ENCODE measurements at regions of chr1 and their contacts with region 1.

Region 1: DNA sequence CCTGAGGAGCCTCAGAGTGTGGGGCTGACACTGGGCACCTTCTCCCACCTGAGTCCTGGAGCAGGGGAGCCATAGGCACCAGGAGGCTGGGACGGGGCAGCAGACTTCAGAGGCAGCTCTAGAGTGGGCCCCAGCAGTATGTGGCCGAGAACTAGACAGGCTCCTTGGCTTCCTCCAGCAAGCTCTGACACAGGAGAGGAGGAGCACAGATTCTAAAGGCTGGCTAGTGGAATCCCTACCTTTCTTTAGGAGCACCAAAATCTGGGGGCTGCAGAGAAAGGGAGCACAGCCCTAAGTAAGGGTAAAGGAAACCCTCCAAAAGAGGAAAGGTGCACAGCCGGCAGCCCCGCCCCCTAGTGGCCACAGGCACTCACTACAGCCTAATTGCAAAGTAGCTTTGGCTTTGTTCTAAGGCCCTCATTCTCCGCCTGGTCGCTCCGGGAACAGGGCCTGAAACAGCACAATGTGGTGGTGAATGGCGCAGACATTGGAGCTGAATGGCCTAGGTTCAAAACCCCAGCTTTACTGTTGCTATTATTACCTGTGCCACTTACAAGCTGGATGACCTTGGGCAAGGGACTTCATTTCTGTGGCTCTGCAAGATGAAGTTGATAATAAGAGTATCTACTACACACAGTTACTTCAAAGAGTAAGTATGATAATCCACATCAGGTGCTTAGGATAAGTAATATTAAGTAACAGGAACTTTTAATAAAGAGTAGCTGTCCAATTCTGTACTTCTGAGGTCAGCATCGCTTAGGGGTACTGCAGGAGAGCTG is 8.8 kb upstream of the GUCA2A start:
- DNase-seq: peak; percentile 42 to 67 (median 66)
- H3K4me3 ChIP-seq: no peak overlapping the region
- H3K27ac ChIP-seq: no peak overlapping the region
- H3K4me1 ChIP-seq: peaks cover 0 to 13% (median 3%) of the 10 kb centered on the region in 4 experiments
- H3K27me3 ChIP-seq: no peaks in the 10 kb centered on the region

Region 2: DNA sequence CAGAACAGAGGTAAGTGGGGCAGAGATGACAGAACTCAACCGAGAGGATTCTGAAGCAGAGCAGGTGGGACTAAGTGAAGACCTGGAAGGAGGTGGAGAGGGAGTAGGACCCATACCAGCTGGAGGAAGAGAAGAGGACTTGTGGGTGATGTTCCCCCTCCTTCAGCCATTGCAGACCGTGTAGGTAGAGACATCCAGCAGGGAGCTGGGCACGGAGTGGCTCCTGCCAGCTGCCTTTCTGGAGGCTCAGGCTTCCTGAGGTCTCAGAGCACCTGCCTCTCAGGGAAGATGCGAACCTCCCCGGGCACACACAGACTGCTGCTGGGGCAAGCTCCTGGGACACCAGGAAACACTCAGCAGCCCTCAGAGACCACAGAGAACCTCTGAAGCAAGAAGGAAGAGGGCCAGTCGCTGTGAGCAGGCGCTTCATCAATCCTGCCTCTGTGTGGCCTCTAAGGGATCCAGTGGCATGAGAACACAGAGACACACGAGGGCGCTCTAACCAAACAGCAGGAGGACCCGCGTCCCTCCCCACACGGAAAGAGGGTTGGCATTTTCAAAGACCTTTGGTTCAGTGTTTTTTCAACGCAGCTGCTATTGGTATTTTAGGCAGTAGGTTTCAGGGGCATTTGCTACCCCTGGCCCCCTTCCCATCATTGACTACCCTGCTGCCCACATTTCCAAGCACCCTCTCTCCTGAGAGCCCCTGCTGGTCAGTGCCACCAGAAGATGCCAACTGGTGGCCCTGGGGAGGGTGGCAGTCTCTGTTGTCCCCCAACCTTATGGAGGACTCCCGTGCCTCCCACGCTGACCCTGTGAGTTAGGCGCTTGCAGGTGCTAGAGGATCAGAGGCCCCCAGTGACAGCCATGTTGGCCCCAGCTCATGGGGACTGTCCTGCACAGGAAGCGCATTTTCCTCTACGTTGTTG is 599.3 kb before region 1 on chr1:
- CTCF ChIA-PET with region 1: interaction called, 34 read pairs
- POLR2A ChIA-PET with region 1: no interaction called
- DNase-seq: peak; percentile 85 to 95 (median 92)
- H3K4me3 ChIP-seq: no peak overlapping the region
- H3K27ac ChIP-seq: no peak overlapping the region
- H3K4me1 ChIP-seq: peaks cover 0 to 25% (median 7%) of the 10 kb centered on the region in 4 experiments
- H3K27me3 ChIP-seq: no peaks in the 10 kb centered on the region

Region 3: GRCh38 chr1:42146626-42147320 is 26.6 kb before region 1 on chr1:
- CTCF ChIA-PET with region 1: interaction called, 13 read pairs
- POLR2A ChIA-PET with region 1: no interaction called
- DNase-seq: peak; percentile 59 to 72 (median 70)
- H3K4me3 ChIP-seq: peak overlapping the region in 1 of 7 experiments; percentile 46
- H3K27ac ChIP-seq: no peak overlapping the region
- H3K4me1 ChIP-seq: peaks cover 2 to 44% (median 41%) of the 10 kb centered on the region in 4 experiments
- H3K27me3 ChIP-seq: no peaks in the 10 kb centered on the region

Region 4: DNA sequence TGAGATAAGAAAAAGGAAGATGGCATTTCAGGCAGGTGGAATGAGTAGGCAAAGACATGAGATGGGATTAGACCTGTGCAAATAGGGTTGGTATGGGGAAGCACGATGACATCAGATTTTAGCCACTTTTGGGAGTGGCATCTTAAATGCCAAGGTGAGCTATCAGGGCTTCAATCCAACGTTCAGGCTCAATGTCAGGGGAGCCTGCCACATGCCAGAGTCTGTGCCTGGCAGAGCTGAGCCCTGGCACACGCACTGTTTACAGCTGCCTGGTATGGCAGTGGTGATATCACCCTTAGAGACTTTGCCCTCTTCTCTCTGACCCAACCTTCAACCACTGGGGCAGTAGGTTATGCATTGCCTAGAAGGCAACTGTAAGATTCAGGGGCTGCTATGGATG is 21.2 kb before region 1 on chr1:
- CTCF ChIA-PET with region 1: interaction called, 23 read pairs
- POLR2A ChIA-PET with region 1: no interaction called
- DNase-seq: no peak
- H3K4me3 ChIP-seq: no peak overlapping the region
- H3K27ac ChIP-seq: no peak overlapping the region
- H3K4me1 ChIP-seq: peaks cover 0 to under 1% (median under 1%) of the 10 kb centered on the region in 4 experiments
- H3K27me3 ChIP-seq: no peaks in the 10 kb centered on the region

Region 5: GRCh38 chr1:42157667-42158066 is 15.7 kb before region 1 on chr1:
- CTCF ChIA-PET with region 1: interaction called, 53 read pairs
- POLR2A ChIA-PET with region 1: no interaction called
- DNase-seq: peak; percentile 71 to 88 (median 80)
- H3K4me3 ChIP-seq: no peak overlapping the region
- H3K27ac ChIP-seq: no peak overlapping the region
- H3K4me1 ChIP-seq: peaks cover 0 to 11% (median 4%) of the 10 kb centered on the region in 4 experiments
- H3K27me3 ChIP-seq: no peaks in the 10 kb centered on the region

Region 6: GRCh38 chr1:42186152-42186551 is 12.8 kb after region 1 on chr1:
- CTCF ChIA-PET with region 1: interaction called, 16 read pairs
- POLR2A ChIA-PET with region 1: no interaction called
- DNase-seq: no peak
- H3K4me3 ChIP-seq: no peak overlapping the region
- H3K27ac ChIP-seq: no peak overlapping the region
- H3K4me1 ChIP-seq: no peaks in the 10 kb centered on the region
- H3K27me3 ChIP-seq: no peaks in the 10 kb centered on the region